CD8-positive, alpha-beta memory T cell (primary cell): ENCODE measurements at regions of chr17 and their contacts with region 1.

Region 1: GRCh38 chr17:76726231-76726775 is at the start of gene JMJD6:
- DNase-seq: peak in 1 of 5 donors; percentile 94
- H3K4me3 ChIP-seq: peak within 1 kb of the TSS; percentile 82
- H3K4me3 Mint-ChIP-seq: peak within 1 kb of the TSS; percentile 93 to 100 (median 97)
- H3K27ac ChIP-seq: peak within 1 kb of the TSS; percentile 93
- H3K27ac Mint-ChIP-seq: peak within 1 kb of the TSS; percentile 96 to 100 (median 99)
- H3K4me1 ChIP-seq: peaks cover 48% of the 10 kb centered on the region
- H3K4me1 Mint-ChIP-seq: peaks cover 46 to 75% (median 59%) of the 10 kb centered on the region in 3 donors
- H3K27me3 ChIP-seq: no peaks in the 10 kb centered on the region
- H3K27me3 Mint-ChIP-seq: peaks cover 0 to 4% of the 10 kb centered on the region in 2 donors
- total RNA-seq, gene JMJD6: 62.7 to 66.8 TPM

Region 2: GRCh38 chr17:76314392-76315227 is 411.7 kb before region 1 on chr17:
- CTCF ChIA-PET with region 1: no interaction called
- POLR2A ChIA-PET with region 1: no interaction called
- DNase-seq: no peak
- H3K4me3 ChIP-seq: no peak overlapping the region
- H3K4me3 Mint-ChIP-seq: no peak overlapping the region
- H3K27ac ChIP-seq: no peak overlapping the region
- H3K27ac Mint-ChIP-seq: peak overlapping the region in 4 of 8 donors; percentile 21 to 63 (median 30)
- H3K4me1 ChIP-seq: no peaks in the 10 kb centered on the region
- H3K4me1 Mint-ChIP-seq: peaks cover 0 to 9% (median 0%) of the 10 kb centered on the region in 3 donors
- H3K27me3 ChIP-seq: no peaks in the 10 kb centered on the region
- H3K27me3 Mint-ChIP-seq: no peaks in the 10 kb centered on the region

Region 3: GRCh38 chr17:76585818-76586593 is 140.3 kb before region 1 on chr17 and contains the start of gene ST6GALNAC2:
- CTCF ChIA-PET with region 1: no interaction called
- POLR2A ChIA-PET with region 1: no interaction called
- DNase-seq: peak; percentile 18 to 74 (median 41)
- H3K4me3 ChIP-seq: peak within 1 kb of the TSS; percentile 39
- H3K4me3 Mint-ChIP-seq: peak within 1 kb of the TSS; percentile 67 to 88 (median 75)
- H3K27ac ChIP-seq: no peak within 1 kb of the TSS
- H3K27ac Mint-ChIP-seq: peak within 1 kb of the TSS in 2 of 8 donors; percentile 43 to 87
- H3K4me1 ChIP-seq: peaks cover 10% of the 10 kb centered on the region
- H3K4me1 Mint-ChIP-seq: peaks cover 0 to 24% (median 9%) of the 10 kb centered on the region in 3 donors
- H3K27me3 ChIP-seq: peaks cover 16% of the 10 kb centered on the region
- H3K27me3 Mint-ChIP-seq: peaks cover 43 to 48% of the 10 kb centered on the region in 2 donors
- total RNA-seq, gene ST6GALNAC2: 0.83 to 1.0 TPM

Region 4: GRCh38 chr17:76671123-76671911 is 55.0 kb before region 1 on chr17:
- CTCF ChIA-PET with region 1: no interaction called
- POLR2A ChIA-PET with region 1: interaction called, 17 read pairs
- DNase-seq: peak; percentile 97 to 100 (median 99)
- H3K4me3 ChIP-seq: peak overlapping the region; percentile 80
- H3K4me3 Mint-ChIP-seq: peak overlapping the region; percentile 86 to 95 (median 94)
- H3K27ac ChIP-seq: peak overlapping the region; percentile 69
- H3K27ac Mint-ChIP-seq: peak overlapping the region; percentile 94 to 100 (median 98)
- H3K4me1 ChIP-seq: peaks cover 35% of the 10 kb centered on the region
- H3K4me1 Mint-ChIP-seq: peaks cover 29 to 35% (median 32%) of the 10 kb centered on the region in 3 donors
- H3K27me3 ChIP-seq: no peaks in the 10 kb centered on the region
- H3K27me3 Mint-ChIP-seq: peaks cover 0 to 2% of the 10 kb centered on the region in 2 donors

Region 5: GRCh38 chr17:76737082-76737675 is 10.9 kb after region 1 on chr17 and contains the start of gene SRSF2:
- CTCF ChIA-PET with region 1: interaction called, 18 read pairs
- POLR2A ChIA-PET with region 1: interaction called, 112 read pairs
- DNase-seq: peak; percentile 98 to 100 (median 99)
- H3K4me3 ChIP-seq: peak within 1 kb of the TSS; percentile 94
- H3K4me3 Mint-ChIP-seq: peak within 1 kb of the TSS; percentile 85 to 98 (median 97)
- H3K27ac ChIP-seq: peak within 1 kb of the TSS; percentile 95
- H3K27ac Mint-ChIP-seq: peak within 1 kb of the TSS; percentile 99 to 100 (median 99)
- H3K4me1 ChIP-seq: peaks cover 61% of the 10 kb centered on the region
- H3K4me1 Mint-ChIP-seq: peaks cover 56 to 75% (median 72%) of the 10 kb centered on the region in 3 donors
- H3K27me3 ChIP-seq: no peaks in the 10 kb centered on the region
- H3K27me3 Mint-ChIP-seq: no peaks in the 10 kb centered on the region
- total RNA-seq, gene SRSF2: 626 to 630 TPM

Region 6: DNA sequence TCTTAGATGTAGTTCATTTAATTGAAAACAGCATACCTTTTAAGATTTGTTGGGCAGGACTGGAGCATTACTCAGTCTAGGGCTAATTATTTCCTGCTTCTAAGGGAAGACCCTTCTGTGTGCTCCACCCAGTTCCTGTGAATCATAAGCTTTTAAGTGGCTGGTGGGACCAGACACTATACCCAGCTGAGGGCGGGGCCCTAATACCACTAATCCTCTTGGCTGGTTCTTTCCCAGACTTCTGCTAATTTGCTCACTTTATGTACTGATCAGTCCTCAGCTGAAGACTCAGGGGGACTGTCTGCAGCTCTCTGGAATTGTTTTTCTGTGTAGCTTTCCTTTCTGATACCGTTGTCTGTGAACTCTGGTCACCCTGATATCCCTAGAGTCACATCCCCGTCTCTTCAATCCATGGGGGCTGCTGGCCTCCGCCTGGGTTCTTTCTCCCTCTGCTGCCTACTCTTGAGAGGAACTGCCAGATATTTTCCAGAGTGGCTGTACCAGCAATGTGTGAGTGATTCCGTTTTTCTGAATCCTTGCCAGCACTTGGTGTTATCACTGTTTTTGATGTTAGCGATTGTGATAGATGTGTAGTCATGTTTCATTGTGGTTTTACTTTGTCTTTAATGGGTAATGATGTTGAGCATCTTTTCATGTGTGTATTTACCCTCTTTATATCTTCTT is 46.7 kb after region 1 on chr17:
- CTCF ChIA-PET with region 1: interaction called, 13 read pairs
- POLR2A ChIA-PET with region 1: interaction called, 8 read pairs
- DNase-seq: peak; percentile 38 to 78 (median 61)
- H3K4me3 ChIP-seq: peak overlapping the region; percentile 26
- H3K4me3 Mint-ChIP-seq: peak overlapping the region; percentile 60 to 89 (median 85)
- H3K27ac ChIP-seq: peak overlapping the region; percentile 61
- H3K27ac Mint-ChIP-seq: peak overlapping the region; percentile 92 to 99 (median 98)
- H3K4me1 ChIP-seq: peaks cover 13% of the 10 kb centered on the region
- H3K4me1 Mint-ChIP-seq: peaks cover 23 to 35% (median 26%) of the 10 kb centered on the region in 3 donors
- H3K27me3 ChIP-seq: no peaks in the 10 kb centered on the region
- H3K27me3 Mint-ChIP-seq: no peaks in the 10 kb centered on the region